CD4-positive, alpha-beta memory T cell (primary cell): ENCODE measurements at regions of chr21 and their contacts with region 1.

Region 1: DNA sequence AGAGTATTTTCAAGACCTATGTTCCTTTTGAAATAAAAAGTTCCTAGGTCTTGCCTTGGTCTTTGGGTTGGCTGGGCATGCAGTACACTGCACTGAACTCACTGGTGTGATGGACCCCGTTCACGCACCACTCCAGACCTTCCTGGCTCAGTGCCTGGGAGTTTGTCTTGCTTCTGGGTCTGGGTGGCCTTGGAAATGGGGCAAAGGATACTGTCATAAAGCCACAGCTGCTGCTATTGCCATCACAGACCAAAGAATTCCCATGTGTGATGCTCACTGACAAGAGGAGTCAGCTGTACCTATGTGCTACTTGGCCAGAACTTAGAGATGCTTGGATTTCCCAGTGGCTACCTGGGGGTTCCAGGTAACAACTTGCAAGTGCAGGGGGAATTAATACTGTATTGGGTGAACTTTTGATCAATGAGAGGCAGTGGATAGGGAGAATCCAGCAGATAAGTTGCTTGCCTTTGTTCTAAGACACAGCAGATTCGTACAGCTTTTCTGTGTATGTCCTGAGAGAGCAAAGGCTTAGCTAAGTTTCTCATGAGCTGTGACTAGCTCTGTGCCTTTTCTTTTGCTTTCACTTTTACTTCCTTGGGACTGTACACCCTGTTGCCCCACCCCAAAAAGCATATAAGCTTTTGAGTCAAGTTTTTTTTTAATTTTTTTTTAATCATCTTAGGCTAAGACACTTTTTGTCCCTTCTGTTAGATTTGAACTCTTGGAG is 115.3 kb downstream of the RUNX1 start:
- DNase-seq: peak; percentile 62 to 75 (median 73)
- H3K4me3 ChIP-seq: peak overlapping the region; percentile 20 to 44
- H3K4me3 Mint-ChIP-seq: peak overlapping the region; percentile 66 to 92 (median 86)
- H3K27ac ChIP-seq: peak overlapping the region; percentile 73
- H3K27ac Mint-ChIP-seq: peak overlapping the region; percentile 94 to 99 (median 96)
- H3K4me1 ChIP-seq: peaks cover 90% of the 10 kb centered on the region
- H3K4me1 Mint-ChIP-seq: peaks cover 75 to 91% (median 82%) of the 10 kb centered on the region in 4 donors
- H3K27me3 ChIP-seq: no peaks in the 10 kb centered on the region
- H3K27me3 Mint-ChIP-seq: no peaks in the 10 kb centered on the region

Region 2: GRCh38 chr21:34649400-34649799 is 284.4 kb before region 1 on chr21:
- CTCF ChIA-PET with region 1: no interaction called
- POLR2A ChIA-PET with region 1: no interaction called
- intact Hi-C with region 1: no loop called
- DNase-seq: no peak
- H3K4me3 ChIP-seq: no peak overlapping the region
- H3K4me3 Mint-ChIP-seq: no peak overlapping the region
- H3K27ac ChIP-seq: no peak overlapping the region
- H3K27ac Mint-ChIP-seq: no peak overlapping the region
- H3K4me1 ChIP-seq: no peaks in the 10 kb centered on the region
- H3K4me1 Mint-ChIP-seq: peaks cover 0 to 3% (median 1%) of the 10 kb centered on the region in 4 donors
- H3K27me3 ChIP-seq: no peaks in the 10 kb centered on the region
- H3K27me3 Mint-ChIP-seq: peaks cover 16 to 29% of the 10 kb centered on the region in 2 donors

Region 3: GRCh38 chr21:34946916-34947534 is 13.3 kb after region 1 on chr21:
- CTCF ChIA-PET with region 1: interaction called, 7 read pairs
- POLR2A ChIA-PET with region 1: interaction called, 12 read pairs
- intact Hi-C with region 1: loop called (anchors 1 kb)
- DNase-seq: no peak
- H3K4me3 ChIP-seq: no peak overlapping the region
- H3K4me3 Mint-ChIP-seq: peak overlapping the region in 2 of 8 donors; percentile 17 to 56
- H3K27ac ChIP-seq: no peak overlapping the region
- H3K27ac Mint-ChIP-seq: peak overlapping the region in 6 of 7 donors; percentile 19 to 67 (median 58)
- H3K4me1 ChIP-seq: peaks cover 82% of the 10 kb centered on the region
- H3K4me1 Mint-ChIP-seq: peaks cover 66 to 97% (median 82%) of the 10 kb centered on the region in 4 donors
- H3K27me3 ChIP-seq: no peaks in the 10 kb centered on the region
- H3K27me3 Mint-ChIP-seq: no peaks in the 10 kb centered on the region

Region 4: GRCh38 chr21:34974162-34974981 is 40.6 kb after region 1 on chr21:
- CTCF ChIA-PET with region 1: no interaction called
- POLR2A ChIA-PET with region 1: interaction called, 43 read pairs
- intact Hi-C with region 1: loop called (anchors 2 kb)
- DNase-seq: peak; percentile 74 to 81 (median 79)
- H3K4me3 ChIP-seq: peak overlapping the region in 1 of 2 donors; percentile 21
- H3K4me3 Mint-ChIP-seq: peak overlapping the region; percentile 38 to 92 (median 83)
- H3K27ac ChIP-seq: peak overlapping the region; percentile 37
- H3K27ac Mint-ChIP-seq: peak overlapping the region; percentile 84 to 98 (median 93)
- H3K4me1 ChIP-seq: peaks cover 82% of the 10 kb centered on the region
- H3K4me1 Mint-ChIP-seq: peaks cover 72 to 94% (median 82%) of the 10 kb centered on the region in 4 donors
- H3K27me3 ChIP-seq: no peaks in the 10 kb centered on the region
- H3K27me3 Mint-ChIP-seq: no peaks in the 10 kb centered on the region

Region 5: DNA sequence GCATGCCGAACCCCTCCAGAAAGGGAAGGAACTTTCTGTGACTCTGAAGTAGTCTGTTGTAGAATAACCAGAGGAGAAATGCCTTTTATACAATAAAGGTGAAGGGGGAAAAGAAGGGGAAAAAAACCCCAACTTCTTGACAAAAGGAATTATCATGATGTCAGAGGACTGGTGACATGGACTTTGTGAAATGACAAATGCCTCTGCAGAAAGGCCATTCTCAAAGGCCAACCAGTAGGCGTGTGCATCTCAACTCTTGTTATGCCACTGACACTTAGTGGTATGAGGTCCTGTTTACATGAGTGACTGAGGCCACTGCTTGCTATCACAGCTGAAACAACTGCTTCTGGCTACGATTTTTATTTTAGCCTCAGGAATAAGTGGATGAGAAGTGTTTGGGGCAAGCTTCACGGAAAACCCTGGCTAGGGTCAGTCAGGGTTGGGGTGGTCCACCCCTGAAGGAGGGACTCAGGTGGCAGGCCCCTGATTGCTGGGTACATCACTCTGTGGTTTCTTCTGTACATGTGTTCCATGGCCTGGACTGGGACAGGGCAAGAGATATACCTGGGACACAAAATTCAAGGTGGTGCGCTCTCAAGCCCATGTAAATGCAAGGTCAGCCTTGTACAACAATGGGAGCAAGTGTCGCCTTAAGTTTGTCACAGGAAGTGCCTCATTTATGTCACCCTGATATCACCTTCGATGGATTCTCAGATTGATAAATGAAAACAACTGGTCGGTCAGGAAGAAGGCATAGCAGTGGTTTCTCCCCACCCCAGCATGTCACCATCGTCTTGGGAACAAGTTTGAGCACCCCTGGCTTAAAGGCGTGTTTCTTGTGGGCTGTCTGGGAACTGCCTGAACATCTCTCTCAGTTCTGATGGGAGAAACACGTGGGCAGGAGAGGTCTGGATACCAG is 103.0 kb after region 1 on chr21:
- CTCF ChIA-PET with region 1: interaction called, 3 read pairs
- POLR2A ChIA-PET with region 1: interaction called, 11 read pairs
- intact Hi-C with region 1: no loop called
- DNase-seq: no peak
- H3K4me3 ChIP-seq: peak overlapping the region; percentile 8 to 18
- H3K4me3 Mint-ChIP-seq: peak overlapping the region in 7 of 8 donors; percentile 71 to 91 (median 81)
- H3K27ac ChIP-seq: peak overlapping the region; percentile 63
- H3K27ac Mint-ChIP-seq: peak overlapping the region; percentile 91 to 97 (median 95)
- H3K4me1 ChIP-seq: peaks cover 99% of the 10 kb centered on the region
- H3K4me1 Mint-ChIP-seq: peaks cover 85 to 100% (median 92%) of the 10 kb centered on the region in 4 donors
- H3K27me3 ChIP-seq: no peaks in the 10 kb centered on the region
- H3K27me3 Mint-ChIP-seq: no peaks in the 10 kb centered on the region